ENCODE measurements at regions of chr1 and their contacts with region 1.

Region 1: GRCh38 chr1:165768513-165769394 is at the start of gene TMCO1:
- DNase-seq: peak; percentile 97
- H3K4me3 ChIP-seq: peak within 1 kb of the TSS; percentile 37 to 92 (median 75)
- H3K27ac ChIP-seq: peak within 1 kb of the TSS; percentile 68
- H3K4me1 ChIP-seq: peaks cover 18% of the 10 kb centered on the region
- H3K27me3 ChIP-seq: no peaks in the 10 kb centered on the region
- CTCF ChIP-seq: peak in 1 of 2 donors; percentile 20
- POLR2A ChIP-seq: peak; percentile 93
- total RNA-seq, gene TMCO1: 80.0 and 86.0 TPM in 2 replicates

Region 2: DNA sequence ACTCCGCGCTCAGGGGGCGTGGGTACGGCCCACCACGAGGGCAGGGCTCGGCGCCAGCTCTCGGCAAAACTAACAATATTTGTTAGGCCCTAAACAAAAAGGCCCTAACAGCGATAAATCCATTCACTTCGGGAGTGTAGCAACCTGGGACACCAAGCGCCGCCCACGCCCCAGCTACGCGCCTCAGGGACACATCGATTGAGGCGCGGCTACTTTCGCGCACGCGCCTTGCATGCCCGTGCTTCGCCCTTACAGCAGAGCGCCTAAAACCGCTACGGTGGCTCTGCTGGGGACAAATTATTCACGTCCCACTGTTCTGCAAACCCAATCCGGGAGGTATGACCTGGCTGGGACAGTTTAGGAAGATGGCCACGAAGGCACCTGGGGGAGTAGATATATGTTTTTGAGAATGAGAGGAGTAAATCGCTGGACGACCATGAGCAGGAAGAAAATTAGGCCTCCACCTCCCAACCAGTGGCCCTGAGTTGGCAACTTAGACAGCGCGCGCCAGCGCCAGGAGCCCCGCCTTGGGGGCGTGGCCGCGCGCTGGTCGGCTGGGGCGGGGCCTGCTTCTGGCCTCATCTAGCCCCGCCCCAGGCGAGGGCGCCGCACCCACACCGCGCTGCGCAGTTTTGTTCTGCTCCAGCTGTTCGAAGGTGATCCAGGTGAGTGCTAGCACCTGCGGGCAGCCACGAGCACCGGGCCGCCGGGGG is 138.0 kb before region 1 on chr1 and contains the start of gene MGST3:
- CTCF ChIA-PET with region 1: interaction called, 3 read pairs
- POLR2A ChIA-PET with region 1: no interaction called
- dilution Hi-C with region 1: no loop called
- intact Hi-C with region 1: loop called (anchors 1 kb)
- DNase-seq: peak; percentile 97
- H3K4me3 ChIP-seq: peak within 1 kb of the TSS; percentile 88 to 94 (median 89)
- H3K27ac ChIP-seq: peak within 1 kb of the TSS; percentile 73
- H3K4me1 ChIP-seq: peaks cover 19% of the 10 kb centered on the region
- H3K27me3 ChIP-seq: peaks cover 4 to 9% of the 10 kb centered on the region in 2 experiments
- CTCF ChIP-seq: no peak
- POLR2A ChIP-seq: peak; percentile 86
- total RNA-seq, gene MGST3: 164 and 196 TPM in 2 replicates

Region 3: DNA sequence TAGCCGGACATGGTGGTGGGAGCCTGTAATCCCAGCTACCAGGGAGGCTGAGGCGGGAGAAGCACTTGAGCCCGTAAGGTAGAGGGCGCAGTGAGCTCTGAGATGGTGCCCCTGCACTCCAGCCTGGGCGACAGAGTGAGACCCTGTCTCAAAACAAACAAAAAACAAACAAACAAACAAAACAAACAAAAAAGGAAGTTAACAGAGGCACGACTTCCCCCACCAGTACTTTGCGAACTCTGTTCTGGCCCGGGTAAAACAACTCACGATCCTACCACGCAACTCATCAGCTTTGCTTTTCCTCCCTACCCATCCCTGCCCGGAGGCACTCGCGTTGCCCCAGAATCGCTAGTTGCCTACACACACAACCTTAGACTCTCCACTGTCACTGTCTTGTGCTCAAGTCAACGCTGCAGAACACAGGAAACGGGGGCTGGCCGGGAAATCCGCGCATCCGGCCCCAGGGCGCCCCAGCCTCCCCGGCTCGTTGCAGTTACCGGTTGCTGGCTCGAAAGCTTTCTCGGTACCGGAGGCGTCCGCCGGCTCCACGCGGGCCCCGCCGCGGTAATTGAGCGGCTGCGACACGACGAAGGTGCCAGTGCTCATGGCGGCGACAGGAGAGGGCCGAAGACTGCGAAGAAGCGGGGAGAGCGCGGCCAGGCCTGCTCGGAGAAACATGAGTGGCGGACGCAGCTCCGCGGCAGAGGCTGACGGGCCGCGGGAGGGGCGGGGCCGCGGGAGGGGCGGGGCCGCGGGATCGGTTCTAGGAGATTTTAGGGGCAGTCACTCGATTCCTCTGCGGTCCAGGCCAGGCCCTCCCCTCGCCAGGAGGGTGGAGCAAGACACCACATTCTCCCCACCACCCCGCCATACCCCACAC is 70.6 kb before region 1 on chr1 and contains the start of gene ALDH9A1:
- CTCF ChIA-PET with region 1: no interaction called
- POLR2A ChIA-PET with region 1: no interaction called
- dilution Hi-C with region 1: no loop called
- intact Hi-C with region 1: loop called (anchors 1 kb)
- DNase-seq: peak; percentile 84
- H3K4me3 ChIP-seq: peak within 1 kb of the TSS; percentile 36 to 75 (median 55)
- H3K27ac ChIP-seq: peak within 1 kb of the TSS; percentile 72
- H3K4me1 ChIP-seq: peaks cover 21% of the 10 kb centered on the region
- H3K27me3 ChIP-seq: peaks cover 2 to 3% of the 10 kb centered on the region in 2 experiments
- CTCF ChIP-seq: peak in 1 of 2 donors; percentile 30
- POLR2A ChIP-seq: peak; percentile 82
- total RNA-seq, gene ALDH9A1: 41.4 and 47.4 TPM in 2 replicates

Region 4: DNA sequence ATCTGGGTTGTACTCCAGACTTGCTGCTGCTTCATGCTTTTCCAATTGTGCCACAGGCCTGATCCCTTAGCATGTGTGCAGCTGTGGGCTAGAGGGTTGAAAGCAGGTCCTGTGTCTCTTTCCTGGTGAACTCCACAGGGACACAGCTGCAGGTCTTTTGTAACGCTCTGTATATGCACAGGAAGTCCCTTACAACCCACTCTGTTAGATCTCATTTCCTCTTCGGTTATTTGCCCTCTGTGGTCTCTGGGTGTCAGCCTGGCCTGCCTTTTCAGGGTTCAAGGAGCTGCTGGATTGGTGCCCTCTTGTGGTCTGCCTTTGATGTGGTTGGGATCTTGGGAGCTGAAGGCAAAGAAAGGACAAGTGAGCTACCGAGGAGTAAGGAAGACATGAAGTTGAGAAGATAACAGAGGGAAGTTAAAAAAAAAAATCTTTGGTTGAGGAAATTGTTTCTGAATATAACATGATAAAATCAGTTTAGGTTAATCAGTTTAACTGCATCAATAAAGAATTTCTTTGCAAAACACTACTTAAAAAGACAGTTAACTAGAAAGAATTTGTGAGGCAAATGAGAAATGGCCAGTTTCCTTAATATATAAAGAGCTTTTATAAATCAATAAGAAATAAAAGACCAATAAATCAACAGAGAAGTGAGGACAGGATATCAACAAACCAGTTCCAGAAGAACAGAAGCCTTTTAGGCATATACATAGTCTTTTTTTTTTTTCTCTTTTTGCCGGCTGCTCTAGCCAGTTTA is 102.7 kb after region 1 on chr1:
- CTCF ChIA-PET with region 1: interaction called, 12 read pairs
- POLR2A ChIA-PET with region 1: no interaction called
- dilution Hi-C with region 1: no loop called
- intact Hi-C with region 1: loop called (anchors 1 kb)
- DNase-seq: peak; percentile 54
- H3K4me3 ChIP-seq: no peak overlapping the region
- H3K27ac ChIP-seq: peak overlapping the region; percentile 21
- H3K4me1 ChIP-seq: peaks cover 10% of the 10 kb centered on the region
- H3K27me3 ChIP-seq: no peaks in the 10 kb centered on the region
- CTCF ChIP-seq: peak; percentile 44 to 45
- POLR2A ChIP-seq: no peak

Region 5: DNA sequence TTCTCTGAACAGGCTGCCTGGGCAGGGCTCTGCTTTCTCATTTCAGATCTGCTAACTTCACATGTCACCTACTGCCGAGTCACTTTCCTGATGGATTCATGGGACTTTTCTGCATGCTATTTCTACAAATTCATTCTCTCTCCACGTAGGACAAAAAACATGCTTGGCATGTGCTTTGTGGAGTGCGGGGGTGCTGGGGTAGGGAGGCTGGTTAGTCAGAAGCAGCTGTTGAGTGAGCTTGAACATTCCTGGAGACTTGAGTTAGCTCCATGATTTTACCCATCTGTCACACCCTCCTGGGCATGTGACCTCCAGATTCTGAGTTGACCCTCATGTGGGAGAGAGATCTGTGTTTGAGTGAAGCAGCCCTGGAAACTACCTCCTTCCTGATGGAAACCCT is 130.1 kb after region 1 on chr1:
- CTCF ChIA-PET with region 1: interaction called, 4 read pairs
- POLR2A ChIA-PET with region 1: interaction called, 4 read pairs
- dilution Hi-C with region 1: no loop called
- intact Hi-C with region 1: loop called (anchors 2 kb)
- DNase-seq: peak; percentile 70
- H3K4me3 ChIP-seq: no peak overlapping the region
- H3K27ac ChIP-seq: peak overlapping the region; percentile 98
- H3K4me1 ChIP-seq: peaks cover 83% of the 10 kb centered on the region
- H3K27me3 ChIP-seq: no peaks in the 10 kb centered on the region
- CTCF ChIP-seq: no peak
- POLR2A ChIP-seq: no peak